ENCODE measurements at regions of chr1 and their contacts with region 1.

Region 1: GRCh38 chr1:231757101-231757404 is 130.5 kb downstream of the DISC1 start:
- DNase-seq: no peak
- ATAC-seq: peak; percentile 54
- H3K4me3 ChIP-seq: no peak overlapping the region
- H3K4me3 Mint-ChIP-seq: peak overlapping the region in 1 of 10 donors; percentile 14
- H3K27ac ChIP-seq: no peak overlapping the region
- H3K27ac Mint-ChIP-seq: no peak overlapping the region
- H3K4me1 ChIP-seq: no peaks in the 10 kb centered on the region
- H3K4me1 Mint-ChIP-seq: peaks cover 0 to 13% (median 0%) of the 10 kb centered on the region in 7 donors
- H3K27me3 ChIP-seq: no peaks in the 10 kb centered on the region
- H3K27me3 Mint-ChIP-seq: no peaks in the 10 kb centered on the region

Region 2: DNA sequence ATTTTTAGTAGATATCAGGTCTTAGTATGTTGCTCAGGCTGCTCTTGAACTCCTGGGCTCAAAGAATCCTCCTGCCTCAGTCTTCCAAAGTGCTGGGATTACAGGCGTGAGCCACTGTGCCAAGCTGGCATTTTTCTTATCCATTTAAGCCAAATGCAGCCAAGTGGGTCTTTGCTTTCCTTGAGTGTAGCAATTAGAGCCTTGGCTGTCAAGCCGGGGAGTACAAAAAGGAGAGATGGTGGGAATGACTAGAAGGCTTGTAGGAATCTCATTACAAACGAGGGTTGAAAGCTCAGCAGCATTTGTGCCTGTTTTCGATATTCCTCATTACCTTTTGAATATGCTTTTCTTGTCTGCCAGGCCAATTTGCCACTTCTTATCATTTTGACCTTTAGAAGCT is 10.4 kb after region 1 on chr1:
- CTCF ChIA-PET with region 1: interaction called, 14 read pairs
- POLR2A ChIA-PET with region 1: no interaction called
- intact Hi-C with region 1: no loop called
- DNase-seq: no peak
- ATAC-seq: no peak
- H3K4me3 ChIP-seq: no peak overlapping the region
- H3K4me3 Mint-ChIP-seq: no peak overlapping the region
- H3K27ac ChIP-seq: no peak overlapping the region
- H3K27ac Mint-ChIP-seq: peak overlapping the region in 1 of 9 donors; percentile 28
- H3K4me1 ChIP-seq: no peaks in the 10 kb centered on the region
- H3K4me1 Mint-ChIP-seq: peaks cover 0 to 6% (median 0%) of the 10 kb centered on the region in 7 donors
- H3K27me3 ChIP-seq: no peaks in the 10 kb centered on the region
- H3K27me3 Mint-ChIP-seq: no peaks in the 10 kb centered on the region

Region 3: GRCh38 chr1:231806623-231807495 is 49.8 kb after region 1 on chr1:
- CTCF ChIA-PET with region 1: interaction called, 3 read pairs
- POLR2A ChIA-PET with region 1: no interaction called
- intact Hi-C with region 1: loop called in 1 of 2 experiments (anchors 2 kb)
- DNase-seq: peak in 6 of 9 donors; percentile 6 to 25 (median 12)
- ATAC-seq: peak; percentile 79
- H3K4me3 ChIP-seq: no peak overlapping the region
- H3K4me3 Mint-ChIP-seq: no peak overlapping the region
- H3K27ac ChIP-seq: no peak overlapping the region
- H3K27ac Mint-ChIP-seq: no peak overlapping the region
- H3K4me1 ChIP-seq: no peaks in the 10 kb centered on the region
- H3K4me1 Mint-ChIP-seq: peaks cover 0 to 12% (median 0%) of the 10 kb centered on the region in 7 donors
- H3K27me3 ChIP-seq: no peaks in the 10 kb centered on the region
- H3K27me3 Mint-ChIP-seq: no peaks in the 10 kb centered on the region

Region 4: GRCh38 chr1:231931846-231932454 is 174.9 kb after region 1 on chr1:
- CTCF ChIA-PET with region 1: interaction called, 3 read pairs
- POLR2A ChIA-PET with region 1: no interaction called
- intact Hi-C with region 1: loop called in 1 of 2 experiments (anchors 2 kb)
- DNase-seq: peak in 3 of 9 donors; percentile 10 to 29 (median 23)
- ATAC-seq: no peak
- H3K4me3 ChIP-seq: no peak overlapping the region
- H3K4me3 Mint-ChIP-seq: no peak overlapping the region
- H3K27ac ChIP-seq: no peak overlapping the region
- H3K27ac Mint-ChIP-seq: no peak overlapping the region
- H3K4me1 ChIP-seq: peaks cover 7 to 18% of the 10 kb centered on the region in 2 donors
- H3K4me1 Mint-ChIP-seq: peaks cover 5 to 39% (median 27%) of the 10 kb centered on the region in 7 donors
- H3K27me3 ChIP-seq: no peaks in the 10 kb centered on the region
- H3K27me3 Mint-ChIP-seq: peaks cover 0 to 15% (median 0%) of the 10 kb centered on the region in 5 donors

Measured in naive thymus-derived CD4-positive, alpha-beta T cell (primary cell).